Ascending aorta (tissue), 2 donors: ENCODE measurements at regions of chr6 and their contacts with region 1.

Region 1: DNA sequence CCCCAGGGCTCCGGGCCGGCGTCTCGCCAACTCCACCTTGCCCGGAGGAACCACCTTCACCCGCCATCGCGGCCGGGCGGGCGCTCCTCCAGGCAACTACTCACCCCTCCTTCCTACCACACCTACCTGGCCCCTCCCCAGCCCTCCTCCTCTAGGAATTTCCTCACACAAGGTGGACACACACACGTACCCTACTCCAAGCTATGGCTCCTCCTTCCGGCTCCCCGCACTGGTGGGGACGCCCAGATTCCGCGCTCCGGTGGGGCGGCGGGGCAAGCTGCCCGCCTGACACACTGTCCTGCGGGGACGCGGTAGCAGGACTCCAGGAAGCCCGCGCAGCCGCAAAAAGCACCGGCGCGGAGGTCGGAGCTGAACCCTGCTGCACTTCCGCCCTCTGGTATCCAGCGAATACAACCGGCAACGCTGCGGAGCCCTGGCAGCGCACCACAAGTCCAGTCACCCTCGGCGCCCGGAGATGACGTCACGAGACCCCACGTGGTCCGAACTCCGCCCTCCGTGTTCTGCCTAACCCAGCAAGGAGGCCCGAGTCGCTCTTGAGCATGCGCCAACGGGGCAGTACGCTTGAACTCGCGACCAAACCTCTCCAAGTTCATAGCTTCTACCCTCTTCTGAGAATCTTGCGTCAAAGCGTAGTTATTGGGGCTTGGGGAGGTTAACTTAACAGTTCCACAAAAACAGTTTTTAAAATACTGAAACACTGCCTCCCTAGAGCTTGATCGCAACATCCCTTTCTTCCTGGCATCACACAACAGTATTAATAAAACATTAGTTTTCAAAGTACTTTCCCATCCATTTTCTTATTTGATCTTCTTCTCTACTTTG is at the start of gene ATG5:
- DNase-seq: peak; percentile 98 to 100
- H3K4me3 ChIP-seq: peak within 1 kb of the TSS; percentile 82 to 85
- H3K27ac ChIP-seq: peak within 1 kb of the TSS; percentile 85 to 90
- H3K4me1 ChIP-seq: peaks cover 0 to 9% of the 10 kb centered on the region in 2 donors
- H3K27me3 ChIP-seq: no peaks in the 10 kb centered on the region
- CTCF ChIP-seq: no peak
- total RNA-seq, gene ATG5: 15.1 TPM

Region 2: DNA sequence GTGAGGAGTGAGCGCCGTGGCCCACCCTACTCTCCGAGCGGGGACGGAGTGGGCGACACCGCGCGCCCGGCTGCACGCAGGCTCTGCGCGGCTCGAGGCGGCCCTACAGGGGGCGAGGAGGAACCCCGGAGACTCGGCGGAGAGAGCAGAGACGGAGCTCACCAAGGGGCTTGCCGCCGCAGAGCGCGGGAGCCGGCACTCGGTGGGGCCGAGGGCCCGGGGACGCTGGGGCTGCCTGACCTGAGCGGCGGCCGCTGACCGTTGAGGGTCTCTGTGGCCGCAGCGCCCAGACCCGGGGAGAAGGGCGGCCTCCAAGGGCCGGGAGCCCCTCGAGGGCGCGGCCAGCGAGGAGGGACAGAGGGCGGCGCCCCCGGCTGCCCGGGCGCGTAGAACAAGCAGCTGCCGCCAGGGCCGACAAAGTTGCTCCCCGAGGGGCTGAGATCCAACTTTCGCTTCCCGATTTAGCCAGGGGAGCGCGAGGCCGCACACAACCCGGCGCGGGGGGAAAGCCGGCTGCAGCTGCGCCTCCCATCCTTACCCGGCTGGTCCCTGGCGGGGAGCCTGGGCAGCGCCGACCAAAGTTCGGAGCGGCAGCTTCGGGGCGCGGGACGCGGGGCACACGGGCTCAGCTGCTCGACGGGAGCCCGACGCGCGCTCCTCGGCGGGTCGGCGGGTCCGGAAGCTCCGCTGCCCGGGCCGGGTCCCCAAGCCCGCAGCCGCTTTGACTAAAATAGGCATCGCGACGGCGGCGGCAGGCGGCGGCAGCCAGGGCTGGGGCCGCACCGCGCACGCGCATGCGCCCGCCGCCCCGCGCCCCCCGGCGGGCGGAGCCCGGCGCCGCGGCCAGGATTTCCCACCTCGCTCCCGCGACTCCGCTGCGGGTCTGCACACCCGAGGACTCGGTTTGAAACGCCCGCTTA is 1188.9 kb before region 1 on chr6:
- intact Hi-C with region 1: loop called (anchors 10 kb)
- DNase-seq: peak in 1 of 2 donors; percentile 69
- H3K4me3 ChIP-seq: peak overlapping the region; percentile 82 to 93
- H3K27ac ChIP-seq: peak overlapping the region; percentile 83 to 90
- H3K4me1 ChIP-seq: peaks cover 0 to 7% of the 10 kb centered on the region in 2 donors
- H3K27me3 ChIP-seq: no peaks in the 10 kb centered on the region
- CTCF ChIP-seq: peak; percentile 6 to 30 (median 11)

Region 3: DNA sequence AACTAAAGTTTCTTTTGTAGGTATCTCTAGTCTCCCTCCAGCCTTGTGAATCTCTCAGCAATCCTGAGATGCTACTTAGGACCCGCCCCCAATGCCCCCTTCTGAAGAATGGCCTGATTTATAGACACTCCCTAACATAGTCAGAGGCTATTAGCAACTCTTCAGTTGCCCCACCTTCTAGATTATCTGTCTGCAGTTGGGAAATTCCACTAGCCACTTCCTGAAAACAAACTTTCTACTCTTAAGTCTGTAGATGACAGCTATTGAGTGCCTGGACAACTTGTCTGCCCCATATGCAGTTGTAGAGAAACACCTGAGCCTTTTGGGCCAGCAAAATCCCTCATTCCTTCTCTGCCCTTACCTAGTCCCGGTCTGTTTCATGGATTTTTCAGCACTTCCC is 734.5 kb before region 1 on chr6:
- intact Hi-C with region 1: loop called (anchors 10 kb)
- DNase-seq: no peak
- H3K4me3 ChIP-seq: no peak overlapping the region
- H3K27ac ChIP-seq: no peak overlapping the region
- H3K4me1 ChIP-seq: peaks cover 6 to 20% of the 10 kb centered on the region in 2 donors
- H3K27me3 ChIP-seq: no peaks in the 10 kb centered on the region
- CTCF ChIP-seq: no peak

Region 4: GRCh38 chr6:106253172-106253571 is 72.4 kb before region 1 on chr6:
- intact Hi-C with region 1: loop called (anchors 5 kb)
- DNase-seq: no peak
- H3K4me3 ChIP-seq: no peak overlapping the region
- H3K27ac ChIP-seq: no peak overlapping the region
- H3K4me1 ChIP-seq: peaks cover 0 to 6% of the 10 kb centered on the region in 2 donors
- H3K27me3 ChIP-seq: no peaks in the 10 kb centered on the region
- CTCF ChIP-seq: no peak

Region 5: DNA sequence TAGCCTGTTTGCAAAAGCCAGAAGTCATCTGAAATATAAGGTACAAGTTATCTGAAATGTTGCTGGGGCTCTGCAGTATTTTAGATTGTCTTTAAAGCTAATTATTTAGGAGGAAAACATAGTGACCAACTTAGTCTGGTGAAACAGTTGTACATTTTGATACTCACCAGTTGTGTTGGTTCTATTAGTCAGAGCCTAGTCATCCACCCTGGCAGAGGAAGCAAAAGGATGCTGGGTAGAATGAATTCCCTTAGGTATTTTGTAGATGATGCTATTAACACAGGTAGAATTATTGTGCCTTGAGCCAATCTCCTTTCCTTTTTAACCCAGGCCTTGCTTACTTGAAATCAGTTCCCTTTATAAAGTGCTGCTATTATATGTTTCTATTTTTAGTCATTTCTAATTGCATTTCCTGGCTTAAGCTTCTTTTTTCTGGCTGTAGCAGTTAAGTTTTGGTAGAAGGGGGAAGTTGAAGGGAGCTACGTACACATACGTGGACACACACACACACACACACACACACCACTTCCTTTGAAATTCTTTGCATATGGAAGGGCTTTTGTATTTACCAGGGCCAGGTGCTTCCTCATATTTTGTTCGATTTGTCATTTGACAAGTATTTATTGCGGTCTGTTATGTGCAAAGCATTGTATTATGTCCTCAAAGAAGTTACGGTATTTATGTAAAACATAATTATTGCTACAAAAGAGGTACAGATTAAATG is 221.3 kb after region 1 on chr6:
- intact Hi-C with region 1: loop called (anchors 5 kb)
- DNase-seq: peak in 1 of 2 donors; percentile 73
- H3K4me3 ChIP-seq: no peak overlapping the region
- H3K27ac ChIP-seq: peak overlapping the region; percentile 71 to 79
- H3K4me1 ChIP-seq: peaks cover 14 to 19% of the 10 kb centered on the region in 2 donors
- H3K27me3 ChIP-seq: no peaks in the 10 kb centered on the region
- CTCF ChIP-seq: no peak

Region 6: DNA sequence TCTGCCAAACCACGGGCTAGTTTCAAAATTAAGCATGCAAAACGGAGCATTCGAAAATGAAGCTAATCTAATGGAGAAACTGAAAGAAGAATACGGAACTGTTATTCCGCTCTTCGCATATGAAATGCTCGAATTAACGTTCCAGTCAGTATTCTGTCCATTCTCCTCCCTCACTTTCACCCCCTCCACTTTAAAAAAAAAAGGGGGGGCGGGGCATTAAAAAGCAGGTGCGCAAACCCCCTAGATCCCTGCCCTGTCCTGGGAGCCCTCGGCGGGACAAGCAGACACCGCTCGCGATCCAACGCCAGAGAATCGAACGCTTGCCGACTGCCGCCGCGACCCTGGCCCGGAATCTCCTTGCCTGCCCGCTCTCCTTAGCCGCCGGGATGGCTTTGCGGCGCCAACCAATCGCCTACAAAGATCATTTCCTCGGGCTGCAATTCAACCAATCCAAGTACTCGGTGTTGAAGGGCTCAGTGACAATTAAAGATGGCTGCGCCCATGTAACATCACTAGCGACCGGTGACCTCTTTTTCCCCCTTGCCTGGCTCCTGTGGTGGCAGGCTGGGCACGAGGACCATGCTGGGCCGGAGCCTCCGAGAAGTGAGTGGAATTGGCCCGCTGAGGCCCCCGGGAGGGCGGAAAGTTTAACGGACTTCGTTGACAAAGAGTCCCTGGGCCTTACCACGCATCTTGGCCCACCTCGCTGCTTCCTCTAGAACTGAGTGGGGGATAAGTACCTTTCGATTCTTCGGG is 303.7 kb after region 1 on chr6 and contains the starts of genes QRSL1 and RTN4IP1:
- intact Hi-C with region 1: loop called (anchors 1 kb)
- DNase-seq: peak; percentile 47 to 92
- H3K4me3 ChIP-seq: peak within 1 kb of the TSS; percentile 64 to 91
- H3K27ac ChIP-seq: peak within 1 kb of the TSS; percentile 68 to 71
- H3K4me1 ChIP-seq: peaks cover 0 to 7% of the 10 kb centered on the region in 2 donors
- H3K27me3 ChIP-seq: no peaks in the 10 kb centered on the region
- CTCF ChIP-seq: no peak
- total RNA-seq, gene QRSL1: 3.9 TPM
- total RNA-seq, gene RTN4IP1: 0.43 TPM

Region 7: GRCh38 chr6:107026965-107027364 is 701.4 kb after region 1 on chr6:
- intact Hi-C with region 1: loop called (anchors 5 kb)
- DNase-seq: no peak
- H3K4me3 ChIP-seq: no peak overlapping the region
- H3K27ac ChIP-seq: no peak overlapping the region
- H3K4me1 ChIP-seq: peaks cover 0 to 9% of the 10 kb centered on the region in 2 donors
- H3K27me3 ChIP-seq: no peaks in the 10 kb centered on the region
- CTCF ChIP-seq: no peak